SK-N-SH (cell line): ENCODE measurements at regions of chr2 and their contacts with region 1.

Region 1: DNA sequence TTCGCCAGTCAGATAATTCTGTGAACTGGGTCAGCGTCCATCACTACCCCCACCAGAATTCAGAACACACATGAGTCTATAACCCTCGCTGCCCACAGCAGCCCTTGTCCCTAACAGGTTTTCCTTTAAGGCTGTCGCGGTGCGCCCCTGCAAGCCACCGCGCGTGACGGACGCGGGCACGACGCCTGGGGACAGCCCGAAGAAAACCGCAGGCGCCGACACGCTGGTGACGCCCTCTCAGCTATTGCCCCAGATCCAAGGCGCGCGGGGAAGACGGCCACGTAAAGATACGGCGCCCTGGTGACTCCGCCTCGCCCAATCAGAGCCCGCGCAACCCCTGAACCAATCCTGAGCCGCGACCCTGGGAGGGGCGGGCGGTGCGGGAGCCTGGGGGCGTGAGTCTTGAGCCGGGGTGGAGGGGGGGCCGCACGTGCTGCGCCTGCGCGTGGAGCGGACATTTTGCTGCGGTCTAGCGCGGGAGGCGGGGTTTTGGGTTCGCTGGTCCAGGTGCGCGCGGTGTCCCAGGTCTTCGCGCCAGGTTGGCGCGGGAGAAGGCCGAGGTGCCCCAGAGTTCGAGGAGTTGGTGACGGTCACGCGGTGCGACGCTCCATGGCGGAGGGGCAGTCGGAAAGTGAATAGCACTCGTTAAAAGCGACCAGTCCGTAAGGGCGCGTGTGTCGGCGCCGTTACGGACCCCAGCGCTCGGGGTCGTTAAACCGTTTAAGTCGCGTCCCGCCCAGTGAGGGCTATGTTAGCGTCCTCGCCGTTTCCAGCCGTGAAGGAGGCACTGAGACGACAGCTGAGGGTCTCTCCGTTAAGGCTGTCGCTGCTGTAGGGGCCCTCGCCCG is 15.9 kb downstream of the NMUR1 start:
- DNase-seq: peak; percentile 100
- H3K4me3 ChIP-seq: peak overlapping the region; percentile 86 to 89
- H3K27ac ChIP-seq: peak overlapping the region; percentile 58 to 86
- H3K4me1 ChIP-seq: peaks cover 0 to 5% of the 10 kb centered on the region in 2 experiments; a peak in 2 of 4 replicates
- H3K27me3 ChIP-seq: no peaks in the 10 kb centered on the region
- CTCF ChIP-seq: no peak
- EP300 ChIP-seq: no peak
- RAD21 ChIP-seq: no peak

Region 2: GRCh38 chr2:231482806-231483391 is 31.4 kb before region 1 on chr2:
- CTCF ChIA-PET with region 1: interaction called, 13 read pairs
- POLR2A ChIA-PET with region 1: no interaction called
- DNase-seq: peak; percentile 96
- H3K4me3 ChIP-seq: no peak overlapping the region; a peak in 1 of 4 replicates
- H3K27ac ChIP-seq: no peak overlapping the region
- H3K4me1 ChIP-seq: no peaks in the 10 kb centered on the region; a peak in 1 of 4 replicates
- H3K27me3 ChIP-seq: no peaks in the 10 kb centered on the region
- CTCF ChIP-seq: peak; percentile 72
- EP300 ChIP-seq: no peak
- RAD21 ChIP-seq: peak; percentile 62

Region 3: DNA sequence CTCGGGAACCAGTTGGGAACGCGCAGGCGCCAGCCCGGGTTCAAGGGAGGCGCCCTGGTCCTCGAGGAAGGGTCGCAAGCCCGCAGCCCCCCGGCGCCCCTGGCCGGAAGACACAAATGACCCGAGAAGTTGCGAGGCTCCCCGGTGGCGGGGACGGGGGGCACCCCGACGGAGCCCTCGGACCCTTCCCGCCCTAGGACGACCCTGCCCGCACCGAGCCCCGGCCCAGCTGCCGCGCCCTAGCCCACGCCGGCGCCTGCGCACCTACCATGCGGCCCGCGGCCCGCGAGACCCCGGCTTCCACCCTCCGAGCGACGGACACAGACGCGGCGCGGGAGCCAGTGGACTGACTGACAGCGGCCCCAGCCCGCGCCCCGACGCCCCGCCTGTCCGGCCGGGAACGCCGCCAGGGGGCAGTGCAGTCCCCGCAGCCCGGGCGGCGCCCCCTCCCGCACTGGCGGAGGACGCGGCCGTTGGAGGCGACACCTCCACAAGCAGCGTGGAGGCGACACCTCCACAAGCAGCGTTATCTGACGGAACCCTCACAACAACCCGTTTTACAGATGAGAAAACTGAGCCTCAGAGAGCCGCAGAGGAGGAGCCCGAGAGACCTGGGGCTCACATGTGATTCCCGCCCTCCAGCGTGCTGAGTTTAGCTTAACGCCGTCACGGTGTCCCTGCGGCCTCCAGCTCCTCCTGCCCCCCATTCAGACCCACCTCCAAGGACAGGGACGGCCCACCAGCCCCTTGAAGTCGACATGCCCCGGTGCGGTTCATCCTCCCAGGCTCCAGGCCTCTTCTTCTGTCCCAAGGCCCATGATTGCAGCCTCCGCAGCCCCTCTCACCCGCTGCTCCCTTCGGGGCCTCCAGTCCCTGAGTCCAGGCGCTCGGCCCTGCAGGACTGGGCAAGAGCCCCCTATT is 16.0 kb after region 1 on chr2 and contains the start of gene NMUR1:
- CTCF ChIA-PET with region 1: interaction called, 14 read pairs
- POLR2A ChIA-PET with region 1: no interaction called
- DNase-seq: peak; percentile 93
- H3K4me3 ChIP-seq: peak within 1 kb of the TSS; percentile 39 to 44; a peak in 3 of 4 replicates
- H3K27ac ChIP-seq: no peak within 1 kb of the TSS
- H3K4me1 ChIP-seq: no peaks in the 10 kb centered on the region; a peak in 1 of 4 replicates
- H3K27me3 ChIP-seq: peaks cover 11% of the 10 kb centered on the region; the same call in 1 of the 2 replicates
- CTCF ChIP-seq: peak; percentile 73
- EP300 ChIP-seq: no peak
- RAD21 ChIP-seq: peak; percentile 34; the same call in 1 of the 2 replicates
- polyA plus RNA-seq, gene NMUR1: not detected in 2 replicates

Region 4: GRCh38 chr2:231539991-231540390 is 25.7 kb after region 1 on chr2:
- CTCF ChIA-PET with region 1: interaction called, 10 read pairs
- POLR2A ChIA-PET with region 1: no interaction called
- DNase-seq: no peak
- H3K4me3 ChIP-seq: no peak overlapping the region
- H3K27ac ChIP-seq: no peak overlapping the region
- H3K4me1 ChIP-seq: no peaks in the 10 kb centered on the region; a peak in 1 of 4 replicates
- H3K27me3 ChIP-seq: no peaks in the 10 kb centered on the region; the same call in 1 of the 2 replicates
- CTCF ChIP-seq: no peak
- EP300 ChIP-seq: no peak
- RAD21 ChIP-seq: no peak

Region 5: DNA sequence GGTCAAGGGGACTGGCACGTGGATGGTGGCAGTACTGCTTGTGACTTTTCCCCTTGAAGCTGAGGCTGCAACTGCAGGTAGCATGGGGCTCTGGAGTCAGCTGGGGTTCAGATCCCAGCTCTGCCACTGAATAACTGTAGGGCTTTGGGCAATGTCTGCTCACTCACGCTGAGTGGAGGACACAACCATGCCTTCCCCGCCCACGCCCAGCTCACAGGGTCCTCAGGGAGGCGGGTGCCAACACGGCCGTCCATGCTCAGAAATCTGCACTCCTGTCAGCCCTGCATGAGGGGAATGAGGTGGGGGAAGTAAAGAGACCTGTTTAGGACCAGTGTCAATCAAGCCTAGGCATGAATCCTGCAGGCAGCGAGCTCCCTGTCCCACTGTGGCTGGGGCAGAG is 182.3 kb after region 1 on chr2:
- CTCF ChIA-PET with region 1: no interaction called
- POLR2A ChIA-PET with region 1: no interaction called
- DNase-seq: no peak
- H3K4me3 ChIP-seq: no peak overlapping the region
- H3K27ac ChIP-seq: no peak overlapping the region
- H3K4me1 ChIP-seq: peaks cover 0 to 10% of the 10 kb centered on the region in 2 experiments; a peak in 1 of 4 replicates
- H3K27me3 ChIP-seq: no peaks in the 10 kb centered on the region
- CTCF ChIP-seq: no peak
- EP300 ChIP-seq: no peak
- RAD21 ChIP-seq: no peak